Pancreas (tissue), 10 donors: ENCODE measurements at regions of chr14 and their contacts with region 1.

Region 1: GRCh38 chr14:74249433-74250375 is 10.5 kb downstream of the VSX2 start:
- DNase-seq: no peak
- ATAC-seq: no peak
- H3K4me3 ChIP-seq: no peak overlapping the region
- H3K27ac ChIP-seq: no peak overlapping the region
- H3K4me1 ChIP-seq: no peaks in the 10 kb centered on the region
- H3K27me3 ChIP-seq: no peaks in the 10 kb centered on the region
- CTCF ChIP-seq: no peak

Region 2: GRCh38 chr14:74109369-74109768 is 140.3 kb before region 1 on chr14:
- intact Hi-C with region 1: loop called in 2 of 3 experiments (anchors 5 kb)
- DNase-seq: no peak
- ATAC-seq: no peak
- H3K4me3 ChIP-seq: no peak overlapping the region
- H3K27ac ChIP-seq: no peak overlapping the region
- H3K4me1 ChIP-seq: no peaks in the 10 kb centered on the region
- H3K27me3 ChIP-seq: no peaks in the 10 kb centered on the region
- CTCF ChIP-seq: no peak

Region 3: GRCh38 chr14:74402401-74403251 is 152.9 kb after region 1 on chr14:
- intact Hi-C with region 1: no loop called
- DNase-seq: no peak
- ATAC-seq: no peak
- H3K4me3 ChIP-seq: no peak overlapping the region
- H3K27ac ChIP-seq: no peak overlapping the region
- H3K4me1 ChIP-seq: no peaks in the 10 kb centered on the region
- H3K27me3 ChIP-seq: no peaks in the 10 kb centered on the region
- CTCF ChIP-seq: no peak

Region 4: GRCh38 chr14:74456684-74457564 is 207.2 kb after region 1 on chr14:
- intact Hi-C with region 1: no loop called
- DNase-seq: no peak
- ATAC-seq: no peak
- H3K4me3 ChIP-seq: no peak overlapping the region
- H3K27ac ChIP-seq: no peak overlapping the region
- H3K4me1 ChIP-seq: no peaks in the 10 kb centered on the region
- H3K27me3 ChIP-seq: no peaks in the 10 kb centered on the region
- CTCF ChIP-seq: no peak